AG04449 (cell line): ENCODE measurements at regions of chr2 and their contacts with region 1.

Region 1: DNA sequence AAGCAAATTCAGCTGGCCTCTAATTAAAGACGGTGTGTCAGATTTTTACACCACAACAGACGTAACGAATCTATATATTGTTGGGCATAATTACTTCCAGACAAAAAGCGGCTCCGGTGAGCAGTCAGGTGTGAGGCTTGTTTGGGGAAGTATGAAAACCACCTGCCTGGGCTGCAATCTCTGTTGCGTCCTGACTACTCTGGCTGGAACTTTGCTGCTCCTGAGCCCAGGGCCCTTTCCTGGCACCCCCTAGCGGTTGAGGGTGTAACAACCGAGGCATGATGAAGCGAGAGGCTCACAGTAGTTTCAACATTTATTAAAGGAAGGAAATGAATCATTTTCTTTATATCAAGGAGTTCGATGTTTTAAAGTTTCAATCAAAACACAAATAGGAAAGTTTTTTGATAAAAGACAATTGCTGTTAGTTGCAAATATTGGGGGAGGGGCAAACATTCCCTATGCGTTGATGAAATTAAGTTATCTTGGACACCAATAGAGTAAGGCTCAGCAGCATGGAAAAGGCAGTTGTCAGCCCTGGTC is 10.6 kb upstream of the ITGB6 start:
- DNase-seq: no peak
- H3K4me3 ChIP-seq: no peak overlapping the region
- CTCF ChIP-seq: peak; percentile 79

Region 2: GRCh38 chr2:160224060-160224459 is 13.4 kb after region 1 on chr2:
- CTCF ChIA-PET with region 1: interaction called, 46 read pairs
- POLR2A ChIA-PET with region 1: interaction called, 9 read pairs
- DNase-seq: peak; percentile 88
- H3K4me3 ChIP-seq: peak overlapping the region; percentile 4; the same call in 1 of the 2 replicates
- CTCF ChIP-seq: no peak